Vagina (tissue), 2 donors: ENCODE measurements at regions of chr5 and their contacts with region 1.

Region 1: GRCh38 chr5:80255732-80256479 is at the start of gene SERINC5:
- DNase-seq: peak in 1 of 2 donors; percentile 93
- H3K4me3 ChIP-seq: peak within 1 kb of the TSS; percentile 64 to 79
- H3K27ac ChIP-seq: peak within 1 kb of the TSS; percentile 96
- H3K4me1 ChIP-seq: peaks cover 53% of the 10 kb centered on the region
- H3K27me3 ChIP-seq: no peaks in the 10 kb centered on the region
- CTCF ChIP-seq: no peak
- POLR2A ChIP-seq: peak in 1 of 2 donors; percentile 90
- total RNA-seq, gene SERINC5: 35.6 TPM

Region 2: DNA sequence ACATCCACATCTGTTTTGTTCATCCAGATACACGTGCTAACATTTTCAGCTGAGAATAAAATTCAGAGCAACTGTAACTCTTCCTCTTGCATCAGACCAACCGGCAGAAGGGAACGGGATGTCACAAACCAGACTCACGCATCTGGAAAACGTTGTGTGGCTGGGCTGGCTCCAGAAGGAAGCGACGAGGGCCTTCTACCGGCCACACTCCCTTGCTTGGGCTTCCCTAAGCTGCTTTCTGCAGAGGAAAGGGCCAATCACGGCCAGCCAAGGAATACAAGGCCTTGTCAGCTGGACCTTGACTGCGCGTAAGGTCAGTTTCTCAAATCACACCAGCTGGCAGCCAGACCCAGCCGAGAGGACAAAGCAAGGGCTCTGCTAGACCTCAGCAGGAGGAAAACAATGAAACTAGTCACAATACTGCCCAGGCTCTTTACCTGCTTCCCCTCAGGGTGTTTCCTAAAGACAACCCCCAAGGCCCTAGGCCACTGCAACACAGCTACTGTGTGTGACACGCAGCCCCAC is 114.7 kb before region 1 on chr5:
- intact Hi-C with region 1: loop called (anchors 5 kb)
- DNase-seq: peak in 1 of 2 donors; percentile 93
- H3K4me3 ChIP-seq: no peak overlapping the region
- H3K27ac ChIP-seq: peak overlapping the region; percentile 73
- H3K4me1 ChIP-seq: peaks cover 22% of the 10 kb centered on the region
- H3K27me3 ChIP-seq: no peaks in the 10 kb centered on the region
- CTCF ChIP-seq: no peak
- POLR2A ChIP-seq: no peak

Region 3: GRCh38 chr5:80407735-80408482 is 152.0 kb after region 1 on chr5 and contains the start of gene ZFYVE16:
- intact Hi-C with region 1: loop called (anchors 5 kb)
- DNase-seq: peak; percentile 96 to 97
- H3K4me3 ChIP-seq: peak within 1 kb of the TSS; percentile 72 to 86
- H3K27ac ChIP-seq: peak within 1 kb of the TSS; percentile 97
- H3K4me1 ChIP-seq: peaks cover 28% of the 10 kb centered on the region
- H3K27me3 ChIP-seq: no peaks in the 10 kb centered on the region
- CTCF ChIP-seq: peak in 1 of 3 experiments; percentile 48
- POLR2A ChIP-seq: peak; percentile 13 to 91
- total RNA-seq, gene ZFYVE16: 28.2 TPM